Left lung (tissue), 14 donors: ENCODE measurements at regions of chr7 and their contacts with region 1.

Region 1: DNA sequence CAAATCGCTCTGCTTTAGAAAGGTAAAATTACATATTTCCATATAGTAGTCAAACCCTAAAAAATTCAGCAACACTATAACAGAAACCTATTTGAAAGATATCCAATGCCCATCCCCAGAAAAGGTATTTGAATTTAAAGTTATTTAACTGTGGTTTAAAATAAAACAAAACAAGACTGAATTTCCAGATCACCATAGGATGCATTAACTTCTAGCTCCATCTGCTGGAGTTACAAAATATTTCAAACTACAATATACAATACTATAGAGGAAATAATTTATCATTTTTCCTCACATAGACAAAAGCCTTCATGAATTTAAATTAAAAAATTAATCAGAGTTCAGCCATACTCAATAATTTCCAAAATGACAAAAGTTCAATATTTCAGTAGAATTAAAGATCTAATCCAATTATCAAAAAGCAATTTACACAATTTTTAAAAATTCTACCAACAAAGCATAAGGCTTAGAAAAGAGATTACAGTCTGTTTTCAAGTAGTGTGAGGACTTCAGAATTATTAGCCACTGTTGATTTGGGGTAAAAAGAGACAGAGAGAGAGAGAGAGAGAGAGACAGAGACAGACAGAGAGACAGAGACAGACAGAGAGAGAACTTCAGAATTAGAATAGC is 75.9 kb downstream of the LMBR1 start:
- DNase-seq: peak in 1 of 4 donors; percentile 13
- ATAC-seq: peak; percentile 33
- H3K4me3 ChIP-seq: no peak overlapping the region
- H3K27ac ChIP-seq: no peak overlapping the region
- H3K4me1 ChIP-seq: no peaks in the 10 kb centered on the region
- H3K27me3 ChIP-seq: no peaks in the 10 kb centered on the region
- CTCF ChIP-seq: peak in 1 of 2 donors; percentile 39

Region 2: GRCh38 chr7:155796381-155797261 is 1020.4 kb before region 1 on chr7:
- intact Hi-C with region 1: loop called in 1 of 2 experiments (anchors 10 kb)
- DNase-seq: peak in 2 of 4 donors; percentile 56 to 95
- ATAC-seq: peak; percentile 98
- H3K4me3 ChIP-seq: no peak overlapping the region
- H3K27ac ChIP-seq: no peak overlapping the region
- H3K4me1 ChIP-seq: peaks cover 0 to 7% of the 10 kb centered on the region in 2 donors
- H3K27me3 ChIP-seq: peaks cover 5 to 62% of the 10 kb centered on the region in 2 donors
- CTCF ChIP-seq: peak; percentile 90 to 94

Region 3: GRCh38 chr7:155896531-155897263 is 920.4 kb before region 1 on chr7:
- intact Hi-C with region 1: no loop called
- DNase-seq: no peak
- ATAC-seq: no peak
- H3K4me3 ChIP-seq: no peak overlapping the region
- H3K27ac ChIP-seq: no peak overlapping the region
- H3K4me1 ChIP-seq: no peaks in the 10 kb centered on the region
- H3K27me3 ChIP-seq: no peaks in the 10 kb centered on the region
- CTCF ChIP-seq: no peak

Region 4: GRCh38 chr7:156668181-156668624 is 148.9 kb before region 1 on chr7:
- intact Hi-C with region 1: no loop called
- DNase-seq: no peak
- ATAC-seq: no peak
- H3K4me3 ChIP-seq: no peak overlapping the region
- H3K27ac ChIP-seq: no peak overlapping the region
- H3K4me1 ChIP-seq: no peaks in the 10 kb centered on the region
- H3K27me3 ChIP-seq: no peaks in the 10 kb centered on the region
- CTCF ChIP-seq: no peak